ENCODE measurements at regions of chr22 and their contacts with region 1.

Region 1: DNA sequence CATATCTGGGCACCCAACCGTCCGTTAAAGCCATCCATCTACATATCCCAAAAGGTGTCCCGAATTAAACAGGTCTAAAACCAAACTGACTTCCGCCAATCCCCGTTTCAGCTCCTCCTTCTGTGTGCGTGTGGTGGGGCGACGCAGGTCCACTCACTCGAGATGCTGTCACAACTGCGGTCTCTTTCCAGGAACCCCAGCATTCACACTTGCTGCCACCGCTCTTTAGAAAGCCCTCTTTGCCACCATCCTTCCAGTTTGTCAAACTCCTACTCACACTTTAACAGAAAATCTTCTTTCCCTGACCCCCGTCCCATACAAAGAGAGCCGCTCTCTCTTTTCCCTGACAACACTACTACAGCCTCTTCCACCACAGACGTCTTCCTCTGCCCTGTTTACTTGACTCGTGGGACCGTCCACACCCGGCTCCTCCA is 467 bp downstream of the ESS2 start:
- DNase-seq: no peak
- H3K4me3 ChIP-seq: peak overlapping the region; percentile 69 to 94 (median 78)
- H3K27ac ChIP-seq: peak overlapping the region; percentile 54
- H3K4me1 ChIP-seq: peaks cover 7% of the 10 kb centered on the region
- H3K27me3 ChIP-seq: peaks cover 17 to 21% of the 10 kb centered on the region in 2 experiments
- CTCF ChIP-seq: no peak
- POLR2A ChIP-seq: no peak

Region 2: DNA sequence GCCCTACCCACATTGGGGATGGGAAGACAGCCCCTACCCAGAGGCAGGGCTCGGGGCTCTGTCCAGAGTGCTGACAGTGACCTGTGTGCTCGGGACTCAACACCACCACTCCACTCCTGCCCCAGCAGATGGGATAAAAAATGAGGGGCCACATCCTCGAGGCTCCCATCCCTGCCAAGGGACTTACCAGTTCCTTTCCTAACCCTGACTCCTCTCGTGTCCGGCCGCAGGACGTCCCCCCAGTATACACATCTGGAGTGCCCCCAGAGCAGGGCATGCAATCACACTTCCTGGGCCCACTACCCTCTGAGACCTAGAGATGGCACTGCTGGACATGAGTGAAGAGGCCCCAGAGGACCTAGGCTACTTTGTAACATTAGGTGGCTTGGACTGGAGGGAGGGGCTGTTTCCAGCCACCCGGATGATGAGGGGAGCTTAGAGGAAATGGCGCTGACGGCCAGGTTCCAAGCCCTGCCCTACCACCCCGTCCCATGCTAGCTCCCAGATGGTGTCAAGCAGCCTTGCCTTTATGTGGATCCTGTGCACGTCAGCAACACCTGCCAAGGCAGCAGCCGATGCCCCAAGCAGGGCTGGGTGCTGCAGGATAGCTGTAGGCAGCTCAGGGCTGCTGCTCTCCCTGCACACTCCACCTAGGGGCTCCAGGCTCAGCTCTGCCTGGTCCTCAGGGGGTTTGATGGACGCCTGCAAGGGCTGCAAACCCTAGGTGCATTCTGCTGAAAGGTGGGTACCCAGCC is 108.3 kb before region 1 on chr22:
- CTCF ChIA-PET with region 1: no interaction called
- POLR2A ChIA-PET with region 1: no interaction called
- dilution Hi-C with region 1: no loop called
- intact Hi-C with region 1: no loop called
- DNase-seq: no peak
- H3K4me3 ChIP-seq: no peak overlapping the region
- H3K27ac ChIP-seq: no peak overlapping the region
- H3K4me1 ChIP-seq: no peaks in the 10 kb centered on the region
- H3K27me3 ChIP-seq: peaks cover 0 to 3% of the 10 kb centered on the region in 2 experiments
- CTCF ChIP-seq: peak in 1 of 2 donors; percentile 38
- POLR2A ChIP-seq: no peak

Region 3: DNA sequence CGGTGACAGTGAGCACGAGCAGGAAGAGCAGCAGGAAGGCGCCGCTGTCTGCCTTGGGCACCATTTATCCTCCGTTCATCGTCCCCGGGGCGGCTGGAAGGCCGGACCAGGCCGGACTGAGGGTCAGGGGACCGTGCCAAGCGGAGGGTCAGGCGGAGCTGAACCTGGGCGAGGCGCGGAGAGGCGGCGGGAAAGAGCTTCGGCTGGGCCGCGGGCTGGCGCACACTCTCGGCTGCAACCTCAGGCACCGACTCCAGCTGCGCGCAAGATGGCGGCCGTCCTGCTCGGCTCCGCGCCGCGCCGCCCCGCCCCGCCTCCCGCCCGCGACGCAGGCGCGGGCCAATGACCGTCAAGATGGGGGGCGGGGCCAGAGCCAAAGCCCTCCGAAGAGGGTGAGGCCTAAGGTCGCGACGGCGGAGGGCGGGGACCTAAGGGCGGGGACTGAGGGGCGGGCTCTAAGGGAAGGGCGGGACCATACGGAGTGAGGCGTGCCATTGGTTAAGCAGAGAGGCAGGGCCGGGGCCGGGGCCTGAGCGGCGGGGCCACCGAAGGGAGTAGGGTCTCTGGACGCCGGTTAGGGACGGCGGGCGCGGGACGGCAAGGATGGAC is 21.7 kb before region 1 on chr22 and contains the start of gene DGCR2:
- CTCF ChIA-PET with region 1: interaction called, 8 read pairs
- POLR2A ChIA-PET with region 1: no interaction called
- dilution Hi-C with region 1: no loop called
- intact Hi-C with region 1: loop called (anchors 1 kb)
- DNase-seq: peak; percentile 97
- H3K4me3 ChIP-seq: peak within 1 kb of the TSS; percentile 61 to 91 (median 80)
- H3K27ac ChIP-seq: peak within 1 kb of the TSS; percentile 4
- H3K4me1 ChIP-seq: peaks cover 9% of the 10 kb centered on the region
- H3K27me3 ChIP-seq: no peaks in the 10 kb centered on the region
- CTCF ChIP-seq: no peak
- POLR2A ChIP-seq: no peak
- total RNA-seq, gene DGCR2: 44.8 and 49.6 TPM in 2 replicates

Region 4: DNA sequence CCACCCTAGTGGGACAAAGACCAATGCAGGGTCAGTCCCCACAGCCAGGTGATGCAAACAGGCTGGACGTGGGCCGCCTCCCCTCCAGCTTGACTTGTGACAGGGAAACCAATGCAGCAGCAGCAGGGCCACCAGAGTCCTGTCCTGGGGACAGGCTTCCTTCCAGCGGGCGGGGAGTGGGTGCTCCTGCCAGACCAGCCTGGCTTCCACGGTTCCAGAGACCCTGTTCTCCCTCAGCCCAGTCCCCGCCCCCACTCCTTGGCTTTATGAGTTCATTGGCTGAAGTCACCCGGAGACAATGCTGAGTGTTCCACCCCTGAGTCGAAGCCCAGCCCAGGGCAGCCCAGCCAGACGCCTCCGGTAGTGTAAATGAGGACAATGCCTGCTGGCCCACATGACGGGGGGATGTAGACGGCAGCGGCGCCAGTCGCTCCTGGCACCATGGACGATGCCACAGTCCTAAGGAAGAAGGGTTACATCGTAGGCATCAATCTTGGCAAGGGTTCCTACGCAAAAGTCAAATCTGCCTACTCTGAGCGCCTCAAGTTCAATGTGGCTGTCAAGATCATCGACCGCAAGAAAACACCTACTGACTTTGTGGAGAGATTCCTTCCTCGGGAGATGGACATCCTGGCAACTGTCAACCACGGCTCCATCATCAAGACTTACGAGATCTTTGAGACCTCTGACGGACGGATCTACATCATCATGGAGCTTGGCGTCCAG is 12.9 kb before region 1 on chr22 and contains the start of gene TSSK2:
- CTCF ChIA-PET with region 1: interaction called, 12 read pairs
- POLR2A ChIA-PET with region 1: no interaction called
- dilution Hi-C with region 1: no loop called
- intact Hi-C with region 1: no loop called
- DNase-seq: no peak
- H3K4me3 ChIP-seq: no peak within 1 kb of the TSS
- H3K27ac ChIP-seq: no peak within 1 kb of the TSS
- H3K4me1 ChIP-seq: no peaks in the 10 kb centered on the region
- H3K27me3 ChIP-seq: no peaks in the 10 kb centered on the region
- CTCF ChIP-seq: no peak
- POLR2A ChIP-seq: no peak
- total RNA-seq, gene TSSK2: not detected in 2 replicates

Region 5: DNA sequence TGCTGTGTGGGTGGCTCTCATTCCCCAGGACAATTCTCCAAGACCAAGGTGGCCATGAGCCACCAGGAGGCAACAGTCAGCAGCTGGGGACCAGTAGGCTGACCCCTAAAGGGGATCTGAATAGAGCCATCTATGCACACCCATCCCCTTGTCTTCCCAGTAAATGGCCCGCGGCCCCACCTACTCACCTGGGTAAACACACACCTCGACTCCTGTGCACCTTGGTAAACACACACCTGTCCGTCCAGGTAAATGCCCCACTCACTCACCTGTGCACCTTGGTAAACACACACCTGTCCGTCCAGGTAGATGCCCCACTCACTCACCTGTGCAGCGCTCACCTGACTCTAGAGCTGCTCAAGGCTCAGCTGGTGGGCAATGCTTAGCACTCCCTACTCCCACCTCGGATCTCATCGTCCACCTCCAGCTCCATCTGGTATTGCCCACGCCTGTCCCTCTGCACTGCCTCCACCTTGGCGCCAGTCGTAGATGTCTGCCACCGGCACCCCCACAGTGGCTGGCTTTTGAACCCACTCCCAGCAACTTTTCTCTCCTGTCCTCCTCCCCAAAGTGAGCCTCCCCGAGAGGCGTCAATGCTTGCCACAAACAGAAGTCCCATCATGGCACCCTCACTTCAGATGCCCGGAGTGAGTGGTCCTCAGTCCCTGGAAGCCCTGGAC is 24.4 kb after region 1 on chr22:
- CTCF ChIA-PET with region 1: no interaction called
- POLR2A ChIA-PET with region 1: no interaction called
- dilution Hi-C with region 1: no loop called
- intact Hi-C with region 1: no loop called
- DNase-seq: no peak
- H3K4me3 ChIP-seq: no peak overlapping the region
- H3K27ac ChIP-seq: no peak overlapping the region
- H3K4me1 ChIP-seq: peaks cover 18% of the 10 kb centered on the region
- H3K27me3 ChIP-seq: peaks cover 22 to 24% of the 10 kb centered on the region in 2 experiments
- CTCF ChIP-seq: no peak
- POLR2A ChIP-seq: no peak